WTC11 (cell line): ENCODE measurements at regions of chr9 and their contacts with region 1.

Region 1: DNA sequence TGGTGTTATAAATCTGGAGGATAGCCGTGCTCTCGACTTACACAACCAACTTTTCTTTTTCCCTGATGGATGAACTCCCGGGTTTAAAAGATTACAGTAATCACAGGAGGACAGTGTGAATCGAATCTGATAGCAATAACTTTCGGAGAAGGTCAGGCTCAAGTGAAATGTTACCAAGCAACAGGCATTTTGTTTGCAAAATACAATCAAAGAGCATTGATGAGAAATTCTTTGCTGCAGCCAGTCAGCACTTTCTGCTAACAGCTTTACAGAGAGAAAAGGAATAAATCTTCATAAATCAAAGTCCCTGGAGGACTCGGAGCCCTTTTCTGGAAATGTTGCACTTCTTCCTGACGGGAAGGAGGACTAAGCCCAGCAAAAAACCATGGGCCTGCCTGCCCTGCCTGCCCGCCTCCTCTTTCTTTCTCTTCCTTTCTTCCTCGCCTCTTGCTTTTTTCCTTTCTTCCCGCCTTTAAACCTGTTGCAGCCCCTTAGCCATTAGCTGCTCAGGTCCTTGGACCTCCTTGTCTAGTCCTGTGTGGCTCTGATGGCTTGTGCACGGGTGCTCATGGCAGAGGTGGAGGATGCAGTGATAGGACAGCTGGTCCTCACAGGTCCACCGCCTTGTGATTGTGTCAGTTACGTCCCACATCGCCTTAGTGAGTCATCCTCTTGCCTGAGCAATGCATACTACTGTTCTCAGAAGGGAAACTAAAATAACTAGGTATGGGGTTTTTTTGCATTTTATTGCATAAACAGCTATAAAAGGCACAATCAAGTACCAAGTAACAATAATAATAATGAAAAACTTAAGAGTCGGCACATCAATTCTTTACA is 6.2 kb downstream of the DMRT3 start:
- DNase-seq: no peak
- ATAC-seq: no peak
- H3K4me3 Mint-ChIP-seq: no peak overlapping the region
- H3K27ac Mint-ChIP-seq: no peak overlapping the region
- H3K4me1 Mint-ChIP-seq: peaks cover 24% of the 10 kb centered on the region
- H3K27me3 Mint-ChIP-seq: peaks cover 98% of the 10 kb centered on the region
- CTCF ChIP-seq: no peak

Region 2: GRCh38 chr9:882478-882877 is 100.1 kb before region 1 on chr9:
- CTCF ChIA-PET with region 1: interaction called, 12 read pairs
- POLR2A ChIA-PET with region 1: no interaction called
- DNase-seq: no peak
- ATAC-seq: peak; percentile 46
- H3K4me3 Mint-ChIP-seq: no peak overlapping the region
- H3K27ac Mint-ChIP-seq: no peak overlapping the region
- H3K4me1 Mint-ChIP-seq: 0 out of 2 replicates have a peak, but pooled peaks cover 3% of the 10 kb centered on the region
- H3K27me3 Mint-ChIP-seq: peaks cover 11% of the 10 kb centered on the region; the same call in 1 of the 2 replicates
- CTCF ChIP-seq: no peak

Region 3: DNA sequence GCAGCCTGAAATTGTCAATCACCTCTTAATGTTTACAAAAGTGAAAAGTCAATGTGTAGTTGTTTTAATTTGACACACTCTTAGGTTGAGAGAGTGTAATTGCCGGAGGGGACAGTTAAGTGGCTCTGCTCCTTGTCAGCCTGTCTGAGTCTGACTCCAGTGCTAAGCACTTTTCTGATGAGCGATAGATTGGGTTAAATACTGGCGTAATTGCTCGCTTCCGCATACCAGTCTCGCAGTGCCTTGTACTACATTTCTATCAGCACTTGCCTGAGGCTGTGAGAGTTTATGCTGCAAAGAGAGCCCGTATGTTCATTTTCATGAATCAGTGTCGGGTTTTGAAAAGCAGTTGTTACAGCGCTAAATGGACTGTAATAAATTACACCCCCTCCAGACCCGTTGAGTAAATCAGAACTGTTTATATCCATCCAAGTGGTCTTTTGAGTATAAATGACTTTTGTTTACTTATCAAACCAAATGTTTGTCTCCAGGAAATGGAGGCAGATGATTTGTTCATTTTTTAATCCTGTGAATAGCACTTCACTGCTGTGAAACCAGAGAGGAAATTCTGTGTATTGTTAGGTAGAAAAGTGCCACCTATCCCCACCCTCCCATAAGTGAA is 47.2 kb before region 1 on chr9:
- CTCF ChIA-PET with region 1: no interaction called
- POLR2A ChIA-PET with region 1: no interaction called
- DNase-seq: no peak
- ATAC-seq: no peak
- H3K4me3 Mint-ChIP-seq: no peak overlapping the region
- H3K27ac Mint-ChIP-seq: no peak overlapping the region
- H3K4me1 Mint-ChIP-seq: no peaks in the 10 kb centered on the region
- H3K27me3 Mint-ChIP-seq: peaks cover 7% of the 10 kb centered on the region; the same call in 1 of the 2 replicates
- CTCF ChIP-seq: no peak